Activated CD4-positive, alpha-beta T cell treated with anti-CD3 and anti-CD28 coated beads for 36 hours (primary cell): ENCODE measurements at regions of chr16 and their contacts with region 1.

Region 1: GRCh38 chr16:75206749-75207451 is at the start of gene CTRB2:
- DNase-seq: no peak
- ATAC-seq: no peak
- H3K4me3 Mint-ChIP-seq: no peak within 1 kb of the TSS
- H3K27ac Mint-ChIP-seq: no peak within 1 kb of the TSS
- H3K4me1 Mint-ChIP-seq: no peaks in the 10 kb centered on the region
- H3K27me3 Mint-ChIP-seq: no peaks in the 10 kb centered on the region
- total RNA-seq, gene CTRB2: not detected

Region 2: DNA sequence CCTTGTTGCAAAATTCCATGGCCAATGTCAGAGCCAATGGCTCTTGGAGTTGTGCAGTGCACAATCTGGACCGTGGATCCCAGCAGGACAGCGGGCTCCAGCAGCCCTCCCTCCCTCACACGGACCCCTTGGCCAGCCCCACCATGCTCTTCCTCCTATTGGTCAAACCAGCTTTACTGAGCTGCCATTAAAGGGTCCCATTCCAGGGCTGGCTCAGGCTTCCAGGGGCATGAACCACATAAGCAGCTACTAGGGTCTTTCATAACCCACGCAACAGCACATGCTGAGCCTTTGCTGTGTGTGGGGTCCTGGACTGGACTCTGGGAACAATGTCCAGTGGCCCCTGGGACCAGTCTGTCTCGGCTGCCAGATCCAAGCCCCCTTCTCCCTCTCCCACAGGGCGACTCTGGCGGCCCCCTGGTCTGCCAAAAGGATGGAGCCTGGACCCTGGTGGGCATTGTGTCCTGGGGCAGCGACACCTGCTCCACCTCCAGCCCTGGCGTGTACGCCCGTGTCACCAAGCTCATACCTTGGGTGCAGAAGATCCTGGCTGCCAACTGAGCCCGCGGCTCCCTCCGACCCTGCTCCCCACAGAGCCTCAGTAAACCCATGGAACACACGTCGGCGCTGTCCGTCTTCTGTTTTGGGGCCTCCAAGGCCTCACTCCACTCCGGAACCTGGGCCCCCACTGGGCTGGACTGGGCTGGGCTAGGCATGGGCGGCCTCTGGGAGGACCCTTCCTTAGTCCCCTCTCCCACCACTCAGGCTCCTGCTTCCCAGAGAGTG is 17.6 kb after region 1 on chr16:
- CTCF ChIA-PET with region 1: interaction called, 5 read pairs
- POLR2A ChIA-PET with region 1: no interaction called
- intact Hi-C with region 1: loop called (anchors 1 kb)
- DNase-seq: no peak
- ATAC-seq: no peak
- H3K4me3 Mint-ChIP-seq: no peak overlapping the region
- H3K27ac Mint-ChIP-seq: no peak overlapping the region
- H3K4me1 Mint-ChIP-seq: peaks cover 8% of the 10 kb centered on the region
- H3K27me3 Mint-ChIP-seq: peaks cover 3% of the 10 kb centered on the region

Region 3: GRCh38 chr16:75265845-75266701 is 59.2 kb after region 1 on chr16:
- CTCF ChIA-PET with region 1: no interaction called
- POLR2A ChIA-PET with region 1: no interaction called
- intact Hi-C with region 1: no loop called
- DNase-seq: peak; percentile 52
- ATAC-seq: peak; percentile 52
- H3K4me3 Mint-ChIP-seq: peak overlapping the region; percentile 62
- H3K27ac Mint-ChIP-seq: no peak overlapping the region
- H3K4me1 Mint-ChIP-seq: peaks cover 5% of the 10 kb centered on the region
- H3K27me3 Mint-ChIP-seq: peaks cover 20% of the 10 kb centered on the region